CD4-positive, alpha-beta T cell (primary cell): ENCODE measurements at regions of chr19 and their contacts with region 1.

Region 1: DNA sequence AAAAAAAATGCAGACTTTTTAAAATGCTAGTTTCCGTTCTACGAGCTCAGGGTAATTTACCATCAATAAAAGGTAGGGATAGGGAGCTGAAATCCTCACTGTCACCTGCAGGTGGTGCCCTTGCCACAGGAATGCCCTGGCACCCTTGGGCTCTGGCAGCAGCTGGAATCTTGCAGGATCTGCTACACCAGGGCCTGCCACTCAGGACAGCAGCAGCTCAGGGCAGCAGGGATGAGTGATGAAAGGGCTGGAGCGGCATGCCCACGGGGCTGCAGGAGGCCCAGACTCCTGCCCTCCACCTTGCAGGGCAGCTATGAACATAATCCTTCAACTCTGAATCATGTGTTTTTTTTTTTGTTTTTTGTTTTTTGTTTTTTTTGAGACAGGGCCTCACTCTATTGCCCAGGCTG is 54.0 kb downstream of the GNG7 start:
- DNase-seq: peak; percentile 55 to 86 (median 72)
- ATAC-seq: peak; percentile 95
- H3K4me3 ChIP-seq: no peak overlapping the region
- H3K4me3 Mint-ChIP-seq: no peak overlapping the region
- H3K27ac ChIP-seq: no peak overlapping the region
- H3K27ac Mint-ChIP-seq: no peak overlapping the region
- H3K4me1 ChIP-seq: no peaks in the 10 kb centered on the region
- H3K4me1 Mint-ChIP-seq: no peaks in the 10 kb centered on the region
- H3K27me3 ChIP-seq: no peaks in the 10 kb centered on the region
- H3K27me3 Mint-ChIP-seq: no peaks in the 10 kb centered on the region
- CTCF ChIP-seq: peak; percentile 87

Region 2: GRCh38 chr19:2494444-2495129 is 153.9 kb before region 1 on chr19:
- CTCF ChIA-PET with region 1: no interaction called
- POLR2A ChIA-PET with region 1: no interaction called
- intact Hi-C with region 1: no loop called
- DNase-seq: peak; percentile 11 to 87 (median 48)
- ATAC-seq: peak; percentile 80
- H3K4me3 ChIP-seq: peak overlapping the region; percentile 74
- H3K4me3 Mint-ChIP-seq: peak overlapping the region; percentile 68
- H3K27ac ChIP-seq: no peak overlapping the region
- H3K27ac Mint-ChIP-seq: no peak overlapping the region
- H3K4me1 ChIP-seq: peaks cover 38% of the 10 kb centered on the region
- H3K4me1 Mint-ChIP-seq: peaks cover 14% of the 10 kb centered on the region
- H3K27me3 ChIP-seq: peaks cover 17 to 23% of the 10 kb centered on the region in 2 experiments
- H3K27me3 Mint-ChIP-seq: peaks cover 40% of the 10 kb centered on the region
- CTCF ChIP-seq: no peak

Region 3: GRCh38 chr19:2750808-2751443 is 102.4 kb after region 1 on chr19:
- CTCF ChIA-PET with region 1: interaction called, 58 read pairs
- POLR2A ChIA-PET with region 1: interaction called, 16 read pairs
- intact Hi-C with region 1: loop called (anchors 1 kb)
- DNase-seq: no peak
- ATAC-seq: no peak
- H3K4me3 ChIP-seq: no peak overlapping the region
- H3K4me3 Mint-ChIP-seq: no peak overlapping the region
- H3K27ac ChIP-seq: no peak overlapping the region
- H3K27ac Mint-ChIP-seq: no peak overlapping the region
- H3K4me1 ChIP-seq: peaks cover 6% of the 10 kb centered on the region
- H3K4me1 Mint-ChIP-seq: no peaks in the 10 kb centered on the region
- H3K27me3 ChIP-seq: no peaks in the 10 kb centered on the region
- H3K27me3 Mint-ChIP-seq: no peaks in the 10 kb centered on the region
- CTCF ChIP-seq: no peak